K562 (cell line): ENCODE measurements at regions of chr4 and their contacts with region 1.

Region 1: DNA sequence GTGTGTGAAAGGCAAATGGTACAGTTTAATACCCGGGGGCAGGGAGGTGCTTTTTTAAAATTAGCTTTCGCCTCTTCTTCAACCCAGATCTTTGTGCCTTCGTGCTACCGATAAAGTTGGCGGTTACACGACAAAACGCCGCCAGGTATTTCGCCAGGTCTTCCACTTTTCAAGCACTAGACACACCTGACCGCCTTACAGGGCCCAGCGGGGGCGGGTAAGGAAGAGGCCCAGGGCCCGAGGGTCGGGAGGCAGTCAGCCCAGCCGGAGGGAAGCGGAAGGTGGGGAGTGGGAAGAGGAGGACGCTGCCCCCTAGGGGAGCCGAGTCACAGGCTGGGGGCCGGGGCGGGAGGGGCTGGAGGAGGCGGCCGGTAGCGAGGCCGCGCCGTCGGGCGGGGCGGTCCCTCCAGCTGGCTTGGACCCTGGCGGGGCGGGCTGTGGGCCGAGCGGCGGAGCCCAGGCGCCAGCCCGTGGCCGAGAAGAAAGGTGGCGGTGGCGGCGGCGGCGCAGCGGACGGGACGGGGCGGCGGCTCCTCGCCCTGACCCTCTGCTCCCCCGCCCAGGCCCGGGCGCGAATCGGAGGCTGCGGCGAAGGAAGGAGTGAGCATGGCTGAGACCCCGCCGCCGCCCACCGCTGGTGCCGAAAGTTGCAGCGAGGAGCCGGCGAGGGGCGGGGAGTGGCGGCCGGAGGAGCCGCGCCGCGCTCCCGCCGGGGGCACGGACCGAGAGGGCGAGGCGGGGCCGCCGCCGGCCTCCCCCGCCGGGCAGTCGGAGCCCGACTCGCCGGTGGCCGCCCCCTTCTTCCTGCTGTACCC is 16.2 kb downstream of the UTP3 start:
- DNase-seq: peak; percentile 84 to 92 (median 87)
- ATAC-seq: peak; percentile 88
- H3K4me3 ChIP-seq: peak overlapping the region; percentile 79
- H3K27ac ChIP-seq: peak overlapping the region; percentile 85
- H3K4me1 ChIP-seq: peaks cover 15% of the 10 kb centered on the region in 2 experiments; a peak in 4 of 5 replicates
- H3K27me3 ChIP-seq: no peaks in the 10 kb centered on the region
- CTCF ChIP-seq: peak; percentile 41 to 62 (median 49); a peak in 4 of 6 replicates
- EP300 ChIP-seq: no peak
- POLR2A ChIP-seq: peak; percentile 75
- RAD21 ChIP-seq: peak in 1 of 2 experiments; percentile 30; a peak in 1 of 4 replicates

Region 2: GRCh38 chr4:70651864-70652506 is 52.6 kb before region 1 on chr4:
- CTCF ChIA-PET with region 1: no interaction called
- POLR2A ChIA-PET with region 1: no interaction called
- in situ Hi-C with region 1: no loop called
- intact Hi-C with region 1: loop called (anchors 5 kb)
- DNase-seq: peak in 2 of 4 experiments; percentile 24 to 41
- ATAC-seq: peak; percentile 79
- H3K4me3 ChIP-seq: no peak overlapping the region
- H3K27ac ChIP-seq: no peak overlapping the region
- H3K4me1 ChIP-seq: peaks cover 0 to 7% of the 10 kb centered on the region in 2 experiments; a peak in 1 of 5 replicates
- H3K27me3 ChIP-seq: no peaks in the 10 kb centered on the region
- CTCF ChIP-seq: peak; percentile 46 to 65 (median 52); a peak in 4 of 6 replicates
- EP300 ChIP-seq: no peak
- POLR2A ChIP-seq: no peak
- RAD21 ChIP-seq: peak; percentile 74 to 75

Region 3: DNA sequence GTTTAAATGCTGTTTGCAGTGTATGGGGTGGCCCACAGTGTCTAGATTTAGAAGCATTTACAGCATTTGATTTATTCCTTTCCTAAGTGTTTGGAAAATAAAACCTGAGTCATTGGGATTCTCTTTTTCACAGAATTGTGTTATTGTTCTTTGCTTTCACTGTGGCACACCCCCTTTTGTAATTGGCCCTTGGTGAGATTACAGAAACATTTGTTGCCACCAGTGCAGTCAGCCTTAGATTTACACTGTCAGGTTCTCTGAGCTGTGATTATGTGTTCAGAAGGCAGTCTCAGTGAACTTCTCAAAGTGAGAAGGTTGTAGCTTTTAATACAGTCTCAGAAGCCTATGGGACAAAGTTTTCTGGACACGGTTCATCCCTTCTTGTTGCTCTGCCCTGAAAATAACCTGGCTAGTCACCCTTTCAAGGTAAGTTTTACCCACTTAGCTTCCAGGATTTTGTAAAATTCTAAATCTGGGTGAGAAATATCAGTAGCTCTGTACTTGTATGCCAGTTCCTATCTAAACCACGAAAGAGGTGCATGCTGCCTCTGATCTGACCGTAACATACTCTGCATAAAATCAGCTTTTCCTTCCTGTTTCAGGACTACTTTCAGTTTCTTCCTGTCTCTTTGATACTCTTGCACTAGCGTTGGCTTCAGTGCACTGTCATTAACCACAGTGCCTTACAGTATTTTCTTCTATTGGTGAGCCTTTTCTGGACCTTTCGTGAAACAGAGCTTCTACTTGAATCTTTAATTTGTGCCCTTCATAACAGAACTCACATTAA is 29.8 kb after region 1 on chr4:
- CTCF ChIA-PET with region 1: no interaction called
- POLR2A ChIA-PET with region 1: interaction called, 10 read pairs
- in situ Hi-C with region 1: no loop called
- intact Hi-C with region 1: no loop called
- DNase-seq: no peak
- ATAC-seq: peak; percentile 71
- H3K4me3 ChIP-seq: peak overlapping the region; percentile 4; the same call in 1 of the 2 replicates
- H3K27ac ChIP-seq: peak overlapping the region; percentile 19; the same call in 1 of the 3 replicates
- H3K4me1 ChIP-seq: peaks cover 0 to 10% of the 10 kb centered on the region in 2 experiments; a peak in 2 of 5 replicates
- H3K27me3 ChIP-seq: no peaks in the 10 kb centered on the region
- CTCF ChIP-seq: no peak
- EP300 ChIP-seq: no peak
- POLR2A ChIP-seq: no peak
- RAD21 ChIP-seq: no peak

Region 4: GRCh38 chr4:70839589-70840093 is 135.1 kb after region 1 on chr4 and contains the start of gene GRSF1:
- CTCF ChIA-PET with region 1: no interaction called
- POLR2A ChIA-PET with region 1: interaction called, 3 read pairs
- in situ Hi-C with region 1: no loop called
- intact Hi-C with region 1: loop called (anchors 2 kb)
- DNase-seq: peak; percentile 91 to 94 (median 93)
- ATAC-seq: peak; percentile 90
- H3K4me3 ChIP-seq: peak within 1 kb of the TSS; percentile 89
- H3K27ac ChIP-seq: peak within 1 kb of the TSS; percentile 95
- H3K4me1 ChIP-seq: peaks cover 15 to 18% of the 10 kb centered on the region in 2 experiments
- H3K27me3 ChIP-seq: no peaks in the 10 kb centered on the region
- CTCF ChIP-seq: peak in 2 of 3 experiments; percentile 32 to 57; a peak in 4 of 6 replicates
- EP300 ChIP-seq: no peak
- POLR2A ChIP-seq: peak; percentile 85
- RAD21 ChIP-seq: peak; percentile 32 to 49
- polyA plus RNA-seq, gene GRSF1: 33.0 to 36.8 TPM

Region 5: DNA sequence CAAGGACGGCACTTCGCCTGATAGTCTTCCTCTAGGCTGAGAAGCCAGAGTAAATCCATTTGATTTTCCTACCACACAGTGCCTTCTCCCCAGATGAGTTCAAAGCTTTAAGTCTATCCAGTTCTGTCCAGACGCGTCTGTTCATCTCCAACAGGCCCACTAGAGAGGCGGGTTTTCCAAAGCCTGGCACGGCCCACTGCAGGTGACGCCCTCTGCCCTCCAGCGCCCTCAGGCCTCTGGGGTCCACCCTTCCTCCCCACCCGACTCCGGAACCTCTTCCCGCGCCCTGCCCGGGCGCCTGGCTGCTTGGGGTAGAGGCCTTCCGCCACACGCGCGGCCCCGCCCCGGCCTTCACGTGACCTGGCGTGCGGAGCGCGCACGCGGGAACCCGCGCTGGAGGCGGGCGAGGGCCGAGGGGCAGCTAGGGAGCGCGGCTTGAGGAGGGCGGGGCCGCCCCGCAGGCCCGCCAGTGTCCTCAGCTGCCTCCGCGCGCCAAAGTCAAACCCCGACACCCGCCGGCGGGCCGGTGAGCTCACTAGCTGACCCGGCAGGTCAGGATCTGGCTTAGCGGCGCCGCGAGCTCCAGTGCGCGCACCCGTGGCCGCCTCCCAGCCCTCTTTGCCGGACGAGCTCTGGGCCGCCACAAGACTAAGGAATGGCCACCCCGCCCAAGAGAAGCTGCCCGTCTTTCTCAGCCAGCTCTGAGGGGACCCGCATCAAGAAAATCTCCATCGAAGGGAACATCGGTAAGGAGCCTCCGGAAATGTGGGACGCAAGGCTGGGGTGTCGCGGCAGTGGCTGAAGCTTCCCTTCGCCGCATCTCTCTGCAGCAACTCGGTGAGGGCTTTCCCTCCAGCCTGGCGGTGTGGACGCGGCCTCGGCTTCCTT is 288.9 kb after region 1 on chr4 and contains the start of gene DCK:
- CTCF ChIA-PET with region 1: no interaction called
- POLR2A ChIA-PET with region 1: interaction called, 3 read pairs
- in situ Hi-C with region 1: no loop called
- intact Hi-C with region 1: loop called (anchors 10 kb)
- DNase-seq: peak; percentile 92 to 96 (median 93)
- ATAC-seq: peak; percentile 91
- H3K4me3 ChIP-seq: peak within 1 kb of the TSS; percentile 82
- H3K27ac ChIP-seq: peak within 1 kb of the TSS; percentile 85
- H3K4me1 ChIP-seq: peaks cover 15 to 19% of the 10 kb centered on the region in 2 experiments; a peak in 4 of 5 replicates
- H3K27me3 ChIP-seq: no peaks in the 10 kb centered on the region
- CTCF ChIP-seq: peak in 1 of 3 experiments; percentile 2; a peak in 1 of 6 replicates
- EP300 ChIP-seq: no peak
- POLR2A ChIP-seq: peak; percentile 87
- RAD21 ChIP-seq: no peak
- polyA plus RNA-seq, gene DCK: 19.6 to 21.2 TPM